ENCODE measurements at regions of chr7 and their contacts with region 1.

Region 1: DNA sequence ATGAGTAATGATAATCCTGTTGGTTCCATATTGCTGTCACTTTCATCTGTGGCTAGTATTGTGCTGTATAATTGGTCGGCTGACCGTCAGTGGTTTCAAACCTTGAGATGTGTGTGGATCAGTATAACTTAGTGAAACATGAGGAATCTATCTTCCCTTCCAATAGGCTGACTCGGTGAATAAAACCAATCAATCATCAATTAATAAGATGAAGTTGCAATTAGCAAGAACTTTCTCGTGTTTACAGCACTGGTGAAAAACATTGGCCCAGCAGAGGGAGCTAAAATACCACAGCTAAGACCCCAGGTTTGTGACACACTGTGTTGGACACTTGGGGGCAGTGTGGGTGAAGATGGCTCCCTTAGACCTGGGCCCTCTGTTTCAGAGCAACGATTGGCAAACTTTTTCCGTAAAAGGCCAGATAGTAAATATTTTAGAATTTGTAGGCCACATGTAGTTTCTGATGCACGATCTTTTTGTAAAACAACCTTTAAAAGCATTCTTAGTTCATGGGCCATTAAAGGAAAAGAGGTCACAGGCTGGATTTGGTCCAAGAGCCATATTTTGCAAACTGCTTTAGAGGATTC is 47.8 kb downstream of the STRA8 start:
- DNase-seq: peak; percentile 68
- H3K4me3 ChIP-seq: no peak overlapping the region
- H3K27ac ChIP-seq: no peak overlapping the region
- H3K4me1 ChIP-seq: peaks cover 0 to 8% of the 10 kb centered on the region in 2 donors
- H3K27me3 ChIP-seq: no peaks in the 10 kb centered on the region
- CTCF ChIP-seq: peak; percentile 92 to 99 (median 94)
- POLR2A ChIP-seq: no peak

Region 2: DNA sequence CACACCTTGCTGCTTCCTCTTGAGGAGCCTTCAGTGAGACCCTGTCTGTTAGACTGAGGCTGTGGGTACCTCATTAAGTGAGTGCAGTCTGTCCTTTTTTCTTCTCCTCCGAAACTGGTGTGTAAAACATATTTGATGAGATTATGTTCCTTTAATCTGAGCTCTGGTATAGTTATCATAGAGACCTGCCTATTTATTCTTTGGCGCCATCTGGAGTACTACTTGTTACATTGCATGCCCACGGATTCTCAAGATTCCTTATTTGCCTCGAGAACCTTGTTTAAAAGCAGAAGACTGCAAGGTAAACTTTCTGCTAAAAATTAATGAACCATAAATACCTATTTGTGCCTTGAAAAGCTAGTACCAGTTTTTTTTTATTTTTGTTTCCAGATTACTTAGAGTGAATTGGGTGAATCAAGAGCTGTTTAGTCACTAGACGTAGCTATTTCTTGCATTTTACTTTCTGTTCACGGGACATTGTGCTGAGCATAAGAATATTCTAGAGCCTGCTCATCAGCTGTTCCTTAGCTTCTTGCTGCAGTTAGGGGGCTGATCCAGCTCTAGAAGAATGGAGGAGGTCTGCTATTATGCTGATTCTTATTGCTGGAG is 363.9 kb after region 1 on chr7:
- intact Hi-C with region 1: loop called (anchors 10 kb)
- DNase-seq: no peak
- H3K4me3 ChIP-seq: no peak overlapping the region
- H3K27ac ChIP-seq: no peak overlapping the region
- H3K4me1 ChIP-seq: no peaks in the 10 kb centered on the region
- H3K27me3 ChIP-seq: no peaks in the 10 kb centered on the region
- CTCF ChIP-seq: peak in 2 of 3 donors; percentile 51 to 71
- POLR2A ChIP-seq: no peak

Measured in breast epithelium (tissue), 4 donors.